Testis (tissue), 5 donors: ENCODE measurements at regions of chr9 and their contacts with region 1.

Region 1: DNA sequence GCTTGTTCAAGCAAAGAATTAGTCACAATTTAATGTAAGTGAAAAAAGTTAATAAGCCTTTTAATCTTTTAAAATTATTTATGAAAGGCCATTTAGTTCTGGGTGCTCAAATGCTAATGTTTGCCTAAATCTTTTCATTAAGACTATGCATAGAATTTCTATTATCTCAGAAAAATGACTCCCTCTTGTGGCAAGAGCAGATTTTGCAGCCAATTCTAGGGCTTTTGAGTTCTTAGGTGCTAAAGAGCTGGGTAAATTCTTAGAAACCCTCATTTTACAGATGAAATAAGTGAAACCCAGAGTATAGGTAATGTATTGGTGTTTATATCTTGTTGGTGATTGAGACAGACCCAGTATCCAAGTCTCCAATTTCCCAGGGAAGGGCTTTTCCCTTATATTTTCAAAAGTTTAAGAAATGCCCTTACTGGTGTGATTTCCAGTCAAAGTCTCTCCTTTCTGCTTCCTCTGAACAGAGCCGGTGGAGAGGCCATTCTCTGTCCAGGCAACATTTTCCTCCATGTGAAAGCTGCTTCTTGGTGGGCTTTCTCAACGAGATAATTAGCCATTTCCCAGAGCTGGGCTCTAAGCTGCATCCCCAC is 24.1 kb upstream of the PCSK5 start:
- DNase-seq: peak; percentile 82
- H3K4me3 ChIP-seq: no peak overlapping the region
- H3K27ac ChIP-seq: no peak overlapping the region
- H3K4me1 ChIP-seq: no peaks in the 10 kb centered on the region
- H3K27me3 ChIP-seq: no peaks in the 10 kb centered on the region
- CTCF ChIP-seq: peak; percentile 60 to 74 (median 74)
- POLR2A ChIP-seq: no peak

Region 2: DNA sequence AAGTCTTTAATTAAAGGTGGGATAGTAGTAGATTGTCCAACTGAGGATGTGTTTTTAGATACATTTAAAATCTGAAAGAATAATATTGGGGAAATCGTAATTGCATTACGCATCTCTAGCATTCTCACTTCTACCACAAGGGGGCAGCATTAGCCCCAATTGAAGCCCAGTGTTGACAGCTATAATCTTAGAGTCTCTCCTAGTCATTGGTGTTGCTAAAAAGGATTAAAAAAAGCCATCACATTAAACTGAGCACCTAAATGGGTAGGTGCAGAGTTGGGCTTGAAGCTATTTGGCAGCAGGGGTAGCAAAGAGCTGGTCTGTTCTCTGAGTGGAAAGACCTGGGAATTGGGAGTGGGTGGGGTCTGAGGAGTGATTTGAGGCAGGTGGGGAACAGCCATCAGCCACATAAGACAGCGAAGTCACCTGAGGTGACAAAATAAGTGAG is 600.8 kb before region 1 on chr9:
- intact Hi-C with region 1: loop called (anchors 10 kb)
- DNase-seq: peak; percentile 77
- H3K4me3 ChIP-seq: no peak overlapping the region
- H3K27ac ChIP-seq: no peak overlapping the region
- H3K4me1 ChIP-seq: no peaks in the 10 kb centered on the region
- H3K27me3 ChIP-seq: no peaks in the 10 kb centered on the region
- CTCF ChIP-seq: peak; percentile 75 to 96 (median 90)
- POLR2A ChIP-seq: no peak

Region 3: DNA sequence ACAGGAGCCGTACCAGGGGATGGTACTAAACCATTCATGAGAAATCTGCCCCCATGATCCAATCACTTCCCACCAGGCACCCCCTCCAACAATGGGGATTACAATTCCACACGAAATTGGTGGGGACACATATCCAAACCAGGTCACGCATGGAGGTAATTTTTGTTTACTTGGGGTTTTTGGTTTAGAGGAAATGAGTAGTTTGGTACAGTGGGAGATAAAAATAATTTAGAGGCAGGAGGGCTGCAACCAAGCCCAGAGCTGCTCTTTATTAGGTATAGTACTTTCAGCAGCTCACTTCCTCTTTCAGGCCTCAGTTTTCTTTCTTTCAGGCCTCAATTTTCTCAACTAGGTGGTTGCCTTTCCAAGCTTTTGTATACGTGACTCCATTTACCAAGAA is 1016.3 kb after region 1 on chr9:
- intact Hi-C with region 1: no loop called
- DNase-seq: no peak
- H3K4me3 ChIP-seq: no peak overlapping the region
- H3K27ac ChIP-seq: no peak overlapping the region
- H3K4me1 ChIP-seq: no peaks in the 10 kb centered on the region
- H3K27me3 ChIP-seq: no peaks in the 10 kb centered on the region
- CTCF ChIP-seq: no peak
- POLR2A ChIP-seq: no peak